ENCODE measurements at regions of chr11 and their contacts with region 1.

Region 1: GRCh38 chr11:130765951-130766649 is 150.2 kb downstream of the SNX19 start:
- DNase-seq: peak; percentile 86
- ATAC-seq: peak; percentile 94
- H3K4me3 ChIP-seq: no peak overlapping the region
- H3K27ac ChIP-seq: peak overlapping the region; percentile 52; the same call in 1 of the 2 replicates
- H3K4me1 ChIP-seq: peaks cover 17% of the 10 kb centered on the region
- H3K27me3 ChIP-seq: no peaks in the 10 kb centered on the region
- CTCF ChIP-seq: no peak
- EP300 ChIP-seq: peak; percentile 97 to 99
- POLR2A ChIP-seq: no peak
- RAD21 ChIP-seq: no peak

Region 2: DNA sequence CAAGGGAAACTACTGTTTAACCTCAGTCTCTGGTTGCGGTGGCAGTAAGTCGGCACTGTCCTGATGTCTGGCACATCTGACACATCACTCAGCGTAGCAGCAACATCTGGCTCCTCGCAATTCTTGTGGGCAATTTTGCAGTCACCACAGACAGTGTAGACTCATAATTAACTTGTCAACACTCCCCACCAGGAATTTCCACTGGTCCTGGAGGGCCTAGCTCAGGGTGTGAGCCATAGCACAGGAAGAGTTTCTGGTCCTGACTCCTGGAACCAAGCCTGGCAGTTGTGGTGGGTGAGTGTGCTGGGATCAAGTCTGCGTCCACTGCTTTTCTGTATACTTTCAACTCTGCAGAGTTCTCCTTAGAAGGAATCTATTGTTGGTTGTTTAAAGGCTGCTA is 59.5 kb before region 1 on chr11:
- CTCF ChIA-PET with region 1: no interaction called
- POLR2A ChIA-PET with region 1: no interaction called
- RAD21 ChIA-PET with region 1: no interaction called
- SMC1A ChIA-PET with region 1: no interaction called
- in situ Hi-C with region 1: no loop called
- intact Hi-C with region 1: no loop called
- DNase-seq: no peak
- ATAC-seq: no peak
- H3K4me3 ChIP-seq: no peak overlapping the region
- H3K27ac ChIP-seq: no peak overlapping the region
- H3K4me1 ChIP-seq: no peaks in the 10 kb centered on the region
- H3K27me3 ChIP-seq: peaks cover 0 to 2% of the 10 kb centered on the region in 2 experiments; a peak in 2 of 4 replicates
- CTCF ChIP-seq: no peak
- EP300 ChIP-seq: no peak
- POLR2A ChIP-seq: no peak
- RAD21 ChIP-seq: no peak

Region 3: GRCh38 chr11:130806746-130807145 is 40.6 kb after region 1 on chr11:
- CTCF ChIA-PET with region 1: no interaction called
- POLR2A ChIA-PET with region 1: no interaction called
- RAD21 ChIA-PET with region 1: no interaction called
- SMC1A ChIA-PET with region 1: interaction called, 5 read pairs
- in situ Hi-C with region 1: no loop called
- intact Hi-C with region 1: loop called (anchors 5 kb)
- DNase-seq: peak; percentile 39
- ATAC-seq: peak; percentile 80
- H3K4me3 ChIP-seq: no peak overlapping the region
- H3K27ac ChIP-seq: no peak overlapping the region
- H3K4me1 ChIP-seq: no peaks in the 10 kb centered on the region
- H3K27me3 ChIP-seq: 0 out of 4 replicates have a peak, but pooled peaks cover 0 to 3% of the 10 kb centered on the region in 2 experiments
- CTCF ChIP-seq: no peak
- EP300 ChIP-seq: peak in 1 of 2 experiments; percentile 68; a peak in 1 of 4 replicates
- POLR2A ChIP-seq: no peak
- RAD21 ChIP-seq: no peak